ENCODE measurements at regions of chr9 and their contacts with region 1.

Region 1: DNA sequence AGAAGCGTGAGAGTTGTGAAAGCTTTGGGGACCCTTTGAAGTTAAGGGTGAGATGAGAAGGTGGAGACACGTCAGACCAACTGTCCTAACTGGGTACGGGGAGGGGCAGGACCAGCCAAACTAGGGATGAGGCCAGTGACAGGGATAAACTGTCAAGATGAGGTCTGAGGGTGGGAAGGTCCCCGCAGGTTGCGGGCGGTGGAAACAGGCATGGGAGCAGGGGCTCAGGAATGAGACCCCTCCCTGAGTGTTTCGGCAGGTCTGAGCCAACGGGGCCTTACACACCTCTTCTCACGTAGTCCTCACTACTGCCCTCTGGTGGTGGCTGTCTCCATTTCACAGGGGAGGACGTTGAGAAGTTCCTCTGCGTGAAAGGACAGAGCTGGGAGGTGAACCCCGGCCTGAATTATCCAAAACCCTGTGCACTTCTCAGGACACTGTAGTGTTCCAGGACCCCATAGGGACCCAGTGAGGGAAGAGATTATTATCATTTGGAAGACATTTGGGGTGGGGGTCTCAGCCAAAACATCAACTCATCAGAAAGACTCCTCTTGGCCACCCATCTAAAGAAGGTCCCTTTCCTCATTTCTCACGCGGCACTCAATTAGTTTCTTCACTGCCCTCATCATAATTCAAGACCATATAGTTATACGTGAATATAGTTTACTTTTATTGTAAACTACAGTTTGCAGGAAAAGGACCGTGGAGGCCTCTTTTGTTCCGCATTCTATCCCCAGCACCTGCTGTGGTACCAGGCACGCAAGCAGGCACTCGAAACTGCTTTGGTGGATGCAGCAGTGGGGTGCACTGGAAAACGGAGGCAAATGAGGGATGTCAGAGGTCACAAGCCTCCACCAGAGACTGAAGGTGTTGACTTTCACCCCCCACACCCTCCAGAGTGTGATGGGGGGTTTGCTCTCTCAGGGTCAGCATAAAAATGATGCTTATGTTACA is 21.7 kb upstream of the NANS start:
- DNase-seq: peak; percentile 95
- ATAC-seq: peak; percentile 98
- H3K4me3 Mint-ChIP-seq: no peak overlapping the region
- H3K27ac Mint-ChIP-seq: peak overlapping the region; percentile 65
- H3K4me1 Mint-ChIP-seq: peaks cover 10% of the 10 kb centered on the region
- H3K27me3 Mint-ChIP-seq: no peaks in the 10 kb centered on the region

Region 2: GRCh38 chr9:97773723-97774122 is 261.1 kb before region 1 on chr9:
- CTCF ChIA-PET with region 1: no interaction called
- POLR2A ChIA-PET with region 1: no interaction called
- DNase-seq: no peak
- ATAC-seq: no peak
- H3K4me3 Mint-ChIP-seq: no peak overlapping the region
- H3K27ac Mint-ChIP-seq: no peak overlapping the region
- H3K4me1 Mint-ChIP-seq: no peaks in the 10 kb centered on the region
- H3K27me3 Mint-ChIP-seq: peaks cover 22% of the 10 kb centered on the region

Region 3: DNA sequence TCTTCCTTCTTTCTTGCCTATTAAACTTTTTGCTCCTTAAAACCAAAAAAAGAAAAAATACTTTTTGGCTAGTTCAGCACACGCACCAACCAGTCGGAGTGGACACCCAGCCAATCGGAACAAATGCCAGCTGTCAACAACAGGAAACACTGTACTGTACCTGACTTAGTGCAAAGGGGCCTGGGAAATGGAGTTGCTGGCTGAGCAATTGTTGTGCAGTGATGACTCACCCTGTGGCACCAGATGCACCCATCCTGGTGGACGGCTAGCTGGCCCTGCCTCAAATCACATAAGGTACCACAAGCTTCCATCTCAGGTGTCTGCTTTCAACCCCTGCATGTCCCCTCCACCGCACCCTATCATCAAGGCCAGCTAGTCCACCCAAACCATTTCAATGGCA is 161.0 kb before region 1 on chr9:
- CTCF ChIA-PET with region 1: no interaction called
- POLR2A ChIA-PET with region 1: no interaction called
- DNase-seq: no peak
- ATAC-seq: no peak
- H3K4me3 Mint-ChIP-seq: no peak overlapping the region
- H3K27ac Mint-ChIP-seq: no peak overlapping the region
- H3K4me1 Mint-ChIP-seq: no peaks in the 10 kb centered on the region
- H3K27me3 Mint-ChIP-seq: peaks cover 19% of the 10 kb centered on the region

Region 4: DNA sequence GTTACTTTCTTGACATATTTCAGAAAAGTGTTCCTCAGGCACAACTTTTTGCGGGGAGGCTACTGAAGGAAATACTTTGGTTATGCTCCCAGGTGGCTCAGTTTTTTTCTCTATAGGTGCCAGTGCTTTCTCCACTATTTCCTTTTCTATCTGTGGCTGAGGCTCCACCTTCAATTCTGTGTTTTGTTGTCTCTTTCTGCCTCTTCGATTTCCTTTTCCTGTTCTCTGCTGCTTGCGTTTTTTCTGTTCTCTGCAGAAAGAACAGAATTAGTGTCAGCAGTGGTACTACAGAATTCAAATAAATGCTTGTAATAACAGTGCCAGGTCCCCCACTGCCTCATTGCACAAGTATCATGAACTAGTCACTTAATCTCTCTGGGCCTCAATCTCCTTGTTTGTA is 103.9 kb before region 1 on chr9:
- CTCF ChIA-PET with region 1: interaction called, 18 read pairs
- POLR2A ChIA-PET with region 1: no interaction called
- DNase-seq: peak; percentile 32
- ATAC-seq: peak; percentile 75
- H3K4me3 Mint-ChIP-seq: peak overlapping the region; percentile 68
- H3K27ac Mint-ChIP-seq: peak overlapping the region; percentile 90
- H3K4me1 Mint-ChIP-seq: peaks cover 44% of the 10 kb centered on the region
- H3K27me3 Mint-ChIP-seq: no peaks in the 10 kb centered on the region

Region 5: GRCh38 chr9:98007251-98007928 is 27.5 kb before region 1 on chr9:
- CTCF ChIA-PET with region 1: interaction called, 36 read pairs
- POLR2A ChIA-PET with region 1: no interaction called
- DNase-seq: no peak
- ATAC-seq: peak; percentile 56
- H3K4me3 Mint-ChIP-seq: no peak overlapping the region
- H3K27ac Mint-ChIP-seq: no peak overlapping the region
- H3K4me1 Mint-ChIP-seq: peaks cover 30% of the 10 kb centered on the region
- H3K27me3 Mint-ChIP-seq: no peaks in the 10 kb centered on the region

Region 6: DNA sequence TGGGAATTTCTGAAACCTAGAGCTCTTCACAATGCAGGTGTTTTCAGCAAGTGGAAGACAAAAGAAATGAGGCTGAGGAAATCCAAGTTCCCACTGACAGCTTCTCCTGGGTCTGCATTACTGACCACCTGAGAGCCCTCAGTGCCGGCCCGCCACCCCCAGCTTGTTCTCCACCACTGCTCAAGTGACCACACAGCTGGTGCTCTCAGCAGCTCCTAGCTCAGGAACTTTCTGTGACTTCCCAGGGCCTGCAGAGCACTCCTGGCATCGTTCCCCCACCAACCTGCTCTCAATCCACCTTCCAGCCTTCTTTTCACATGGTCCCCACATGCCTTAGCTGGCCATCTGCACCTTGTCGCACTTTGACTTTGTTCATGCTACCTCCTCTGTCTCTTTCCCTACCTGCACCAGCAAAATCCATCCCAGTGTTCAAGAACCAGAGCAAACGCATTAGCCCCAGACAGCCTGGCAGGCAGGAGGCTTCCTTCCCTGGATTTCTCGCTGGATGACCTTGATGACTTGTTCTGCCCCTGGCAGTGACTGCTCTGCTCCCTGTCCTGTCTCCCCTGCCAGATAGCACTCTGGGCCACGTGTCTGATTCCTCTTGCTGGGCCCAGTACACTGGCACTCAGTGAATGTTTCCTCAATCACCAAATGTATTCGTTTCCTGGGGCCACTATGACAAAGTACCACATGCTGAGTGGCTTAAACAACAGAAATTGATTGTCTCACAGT is 13.4 kb before region 1 on chr9:
- CTCF ChIA-PET with region 1: interaction called, 12 read pairs
- POLR2A ChIA-PET with region 1: no interaction called
- DNase-seq: no peak
- ATAC-seq: no peak
- H3K4me3 Mint-ChIP-seq: no peak overlapping the region
- H3K27ac Mint-ChIP-seq: peak overlapping the region; percentile 11
- H3K4me1 Mint-ChIP-seq: no peaks in the 10 kb centered on the region
- H3K27me3 Mint-ChIP-seq: no peaks in the 10 kb centered on the region

Region 7: GRCh38 chr9:98045234-98046179 is 10.6 kb after region 1 on chr9:
- CTCF ChIA-PET with region 1: interaction called, 45 read pairs
- POLR2A ChIA-PET with region 1: no interaction called
- DNase-seq: peak; percentile 71
- ATAC-seq: peak; percentile 95
- H3K4me3 Mint-ChIP-seq: peak overlapping the region; percentile 84
- H3K27ac Mint-ChIP-seq: peak overlapping the region; percentile 93
- H3K4me1 Mint-ChIP-seq: peaks cover 42% of the 10 kb centered on the region
- H3K27me3 Mint-ChIP-seq: no peaks in the 10 kb centered on the region

Measured in activated CD8-positive, alpha-beta T cell treated with anti-CD3 and anti-CD28 coated beads, Interleukin-2, amount 10 ng/mL, durations not matched to agents 7 days and 5 days (primary cell).